K562 (cell line): ENCODE measurements at regions of chr17 and their contacts with region 1.

Region 1: DNA sequence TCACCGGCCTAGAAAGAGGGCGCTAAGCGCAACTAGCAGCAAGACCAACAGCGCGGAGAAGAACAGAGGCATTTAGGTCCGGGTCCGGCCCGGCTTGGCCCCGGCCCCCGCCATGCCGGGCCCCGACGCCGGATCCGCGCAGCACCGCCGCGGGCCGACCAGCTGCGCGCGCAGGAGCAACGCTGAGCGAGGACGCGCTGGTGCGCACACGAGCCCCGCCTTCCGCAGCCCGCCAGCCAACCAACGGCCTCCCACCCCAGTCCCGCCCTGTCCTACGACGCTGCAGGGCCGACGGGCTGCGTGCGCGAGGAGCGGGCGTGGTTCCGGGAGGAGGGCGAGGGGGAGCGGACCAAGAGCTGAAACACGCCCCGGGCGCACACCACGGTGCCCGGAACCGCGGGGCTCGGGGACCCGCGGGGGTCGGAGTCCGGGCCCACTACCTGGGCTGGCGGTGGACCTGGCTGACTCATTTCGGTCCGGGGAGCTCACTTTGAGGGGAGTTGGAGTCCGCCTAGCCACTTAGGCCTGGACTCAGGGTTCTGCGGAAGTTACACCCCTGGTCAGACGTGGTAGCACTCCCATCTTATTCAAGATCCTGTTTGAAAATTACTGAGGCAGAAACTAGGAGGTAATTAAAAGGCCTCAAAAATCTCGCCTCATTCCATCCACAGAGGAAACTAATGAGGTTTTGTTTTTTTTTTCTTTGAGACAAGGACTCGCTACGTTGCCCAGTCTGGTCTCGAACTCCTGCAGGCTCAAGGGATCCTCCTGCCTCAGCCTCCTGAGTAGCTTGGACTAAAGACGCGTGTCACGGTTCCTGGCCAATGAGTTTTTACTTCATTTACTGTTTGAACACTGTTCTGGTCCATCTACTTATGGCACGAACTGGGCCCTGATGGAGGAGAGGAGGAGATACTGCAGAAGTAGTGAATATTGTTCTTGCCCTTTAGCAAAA is at the start of gene BLTP2:
- DNase-seq: peak; percentile 98 to 99 (median 99)
- ATAC-seq: peak; percentile 97
- H3K4me3 ChIP-seq: peak within 1 kb of the TSS; percentile 83
- H3K27ac ChIP-seq: peak within 1 kb of the TSS; percentile 85
- H3K4me1 ChIP-seq: peaks cover 16 to 23% of the 10 kb centered on the region in 2 experiments
- H3K27me3 ChIP-seq: no peaks in the 10 kb centered on the region
- CTCF ChIP-seq: no peak
- EP300 ChIP-seq: no peak
- POLR2A ChIP-seq: peak; percentile 89
- RAD21 ChIP-seq: no peak
- polyA plus RNA-seq, gene BLTP2: 14.7 to 34.3 TPM

Region 2: GRCh38 chr17:28547623-28548416 is 97.4 kb before region 1 on chr17:
- CTCF ChIA-PET with region 1: no interaction called
- POLR2A ChIA-PET with region 1: no interaction called
- in situ Hi-C with region 1: no loop called
- intact Hi-C with region 1: no loop called
- DNase-seq: peak; percentile 58 to 76 (median 66)
- ATAC-seq: peak; percentile 34
- H3K4me3 ChIP-seq: no peak overlapping the region
- H3K27ac ChIP-seq: no peak overlapping the region
- H3K4me1 ChIP-seq: peaks cover 6 to 16% of the 10 kb centered on the region in 2 experiments; a peak in 4 of 5 replicates
- H3K27me3 ChIP-seq: no peaks in the 10 kb centered on the region
- CTCF ChIP-seq: peak; percentile 81 to 89 (median 87)
- EP300 ChIP-seq: no peak
- POLR2A ChIP-seq: no peak
- RAD21 ChIP-seq: peak; percentile 26 to 46; a peak in 2 of 4 replicates

Region 3: GRCh38 chr17:28598799-28599310 is 46.4 kb before region 1 on chr17 and contains the start of gene SPAG5:
- CTCF ChIA-PET with region 1: no interaction called
- POLR2A ChIA-PET with region 1: interaction called, 16 read pairs
- in situ Hi-C with region 1: no loop called
- intact Hi-C with region 1: no loop called
- DNase-seq: peak; percentile 98 to 100 (median 100)
- ATAC-seq: peak; percentile 94
- H3K4me3 ChIP-seq: peak within 1 kb of the TSS; percentile 81
- H3K27ac ChIP-seq: peak within 1 kb of the TSS; percentile 88
- H3K4me1 ChIP-seq: peaks cover 8 to 16% of the 10 kb centered on the region in 2 experiments; a peak in 4 of 5 replicates
- H3K27me3 ChIP-seq: no peaks in the 10 kb centered on the region
- CTCF ChIP-seq: no peak
- EP300 ChIP-seq: no peak
- POLR2A ChIP-seq: peak; percentile 98
- RAD21 ChIP-seq: no peak
- polyA plus RNA-seq, gene SPAG5: 94.4 to 286 TPM

Region 4: DNA sequence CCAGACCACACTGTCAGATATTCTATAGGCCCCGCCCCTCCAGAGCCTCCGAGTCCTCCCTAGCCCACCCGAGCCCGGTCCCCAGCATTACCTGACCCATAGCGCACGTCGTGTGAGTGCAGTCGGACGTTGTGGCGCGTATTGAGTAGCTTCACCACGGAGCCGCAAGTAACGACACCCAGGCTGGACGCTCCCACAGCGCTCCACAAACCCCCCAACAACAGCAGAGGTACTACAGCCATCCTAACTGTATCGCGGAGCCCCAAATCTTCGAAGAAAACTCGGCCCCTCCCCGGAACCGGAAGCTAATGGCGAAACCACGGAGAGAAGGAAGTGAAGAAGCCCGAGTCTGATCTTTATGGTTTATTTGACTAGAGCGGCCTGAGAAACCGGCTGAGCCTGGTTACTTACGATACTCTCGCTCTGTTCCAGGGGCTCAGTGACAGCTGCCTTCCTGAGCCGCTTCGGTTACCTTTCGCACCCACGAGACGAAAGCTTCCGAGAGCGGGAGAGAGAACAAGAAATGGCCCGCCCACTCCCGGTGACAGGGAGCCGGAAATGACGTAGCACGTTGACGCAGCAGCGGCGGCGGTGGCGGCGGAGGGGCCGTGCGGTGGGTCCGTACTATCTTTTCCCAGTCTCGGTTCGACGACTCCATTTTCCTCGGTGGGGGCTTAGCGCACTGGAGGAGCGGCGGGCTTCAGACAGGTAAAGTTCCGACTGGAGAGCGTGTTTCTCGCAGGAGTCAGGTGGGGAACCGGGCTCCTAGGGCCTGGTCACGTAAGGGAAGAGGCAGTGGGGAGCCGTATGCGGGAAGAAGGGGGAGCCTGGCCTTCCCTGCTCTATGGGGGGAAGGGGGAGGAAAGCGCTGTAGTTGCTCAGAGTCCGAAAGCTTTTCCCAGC is 16.6 kb after region 1 on chr17 and contains the starts of genes SDF2 and SUPT6H:
- CTCF ChIA-PET with region 1: interaction called, 5 read pairs
- POLR2A ChIA-PET with region 1: interaction called, 54 read pairs
- in situ Hi-C with region 1: no loop called
- intact Hi-C with region 1: no loop called
- DNase-seq: peak; percentile 92 to 97 (median 94)
- ATAC-seq: peak; percentile 89
- H3K4me3 ChIP-seq: peak within 1 kb of the TSS; percentile 61
- H3K27ac ChIP-seq: peak within 1 kb of the TSS; percentile 98
- H3K4me1 ChIP-seq: peaks cover 6 to 10% of the 10 kb centered on the region in 2 experiments; a peak in 3 of 5 replicates
- H3K27me3 ChIP-seq: no peaks in the 10 kb centered on the region
- CTCF ChIP-seq: peak; percentile 19 to 45 (median 34); a peak in 4 of 6 replicates
- EP300 ChIP-seq: no peak
- POLR2A ChIP-seq: peak; percentile 97
- RAD21 ChIP-seq: no peak
- polyA plus RNA-seq, gene SDF2: 116 to 132 TPM
- polyA plus RNA-seq, gene SUPT6H: 1.7 to 3.3 TPM

Region 5: GRCh38 chr17:28684963-28685362 is 39.7 kb after region 1 on chr17:
- CTCF ChIA-PET with region 1: no interaction called
- POLR2A ChIA-PET with region 1: interaction called, 14 read pairs
- in situ Hi-C with region 1: no loop called
- intact Hi-C with region 1: no loop called
- DNase-seq: peak in 2 of 4 experiments; percentile 44 to 61
- ATAC-seq: peak; percentile 54; the same call in 2 of the 3 replicates
- H3K4me3 ChIP-seq: no peak overlapping the region
- H3K27ac ChIP-seq: no peak overlapping the region
- H3K4me1 ChIP-seq: no peaks in the 10 kb centered on the region
- H3K27me3 ChIP-seq: no peaks in the 10 kb centered on the region
- CTCF ChIP-seq: peak; percentile 15 to 56 (median 35); a peak in 3 of 6 replicates
- EP300 ChIP-seq: no peak
- POLR2A ChIP-seq: no peak
- RAD21 ChIP-seq: peak in 1 of 2 experiments; percentile 58; a peak in 2 of 4 replicates

Region 6: GRCh38 chr17:28700830-28701492 is 55.7 kb after region 1 on chr17:
- CTCF ChIA-PET with region 1: no interaction called
- POLR2A ChIA-PET with region 1: no interaction called
- in situ Hi-C with region 1: no loop called
- intact Hi-C with region 1: no loop called
- DNase-seq: peak in 1 of 4 experiments; percentile 12
- ATAC-seq: no peak
- H3K4me3 ChIP-seq: no peak overlapping the region
- H3K27ac ChIP-seq: no peak overlapping the region
- H3K4me1 ChIP-seq: peaks cover 0 to 7% of the 10 kb centered on the region in 2 experiments; a peak in 1 of 5 replicates
- H3K27me3 ChIP-seq: no peaks in the 10 kb centered on the region
- CTCF ChIP-seq: 0 out of 6 replicates have a peak, but pooled peaks of 1 of the 3 experiments have one; percentile 13
- EP300 ChIP-seq: no peak
- POLR2A ChIP-seq: no peak
- RAD21 ChIP-seq: no peak

Region 7: DNA sequence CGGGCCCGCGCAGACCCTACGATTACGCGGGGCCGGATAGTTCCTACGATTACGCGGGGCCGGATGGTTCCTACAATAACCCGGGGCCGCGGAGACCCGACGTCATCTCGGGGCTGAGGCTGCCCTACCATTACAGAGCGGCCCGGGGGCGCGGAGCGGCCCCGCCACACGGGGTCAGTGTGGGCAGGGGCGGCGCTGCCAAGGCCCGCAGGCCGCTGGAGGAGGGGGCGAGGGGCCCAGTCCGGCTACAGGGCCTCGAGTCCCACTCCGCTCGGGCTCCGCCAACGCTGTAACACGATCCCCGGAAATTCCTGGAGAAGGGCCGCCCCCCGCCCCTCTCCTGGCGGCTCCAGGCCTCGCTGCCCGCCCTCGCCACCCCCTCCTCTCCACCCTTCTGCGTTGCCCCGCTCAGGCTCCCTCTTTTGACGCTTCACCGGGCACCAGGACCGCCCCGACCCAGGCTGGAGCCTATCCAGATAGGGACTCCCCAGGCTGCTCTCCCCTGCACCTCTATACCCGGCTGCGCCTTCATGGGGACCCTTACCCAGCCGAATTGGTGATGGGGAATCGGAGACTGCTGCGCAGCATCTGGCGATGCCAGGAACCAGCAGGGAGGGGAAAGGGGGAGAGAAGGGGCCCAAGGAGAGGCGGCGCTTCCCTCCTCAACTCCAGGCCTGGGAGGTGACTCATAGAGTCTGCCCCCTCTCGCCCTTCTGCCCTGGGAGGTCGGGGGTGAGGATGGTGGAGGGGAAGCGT is 72.5 kb after region 1 on chr17 and contains the start of gene RAB34:
- CTCF ChIA-PET with region 1: interaction called, 5 read pairs
- POLR2A ChIA-PET with region 1: interaction called, 16 read pairs
- in situ Hi-C with region 1: no loop called
- intact Hi-C with region 1: loop called (anchors 2 kb)
- DNase-seq: no peak
- ATAC-seq: no peak
- H3K4me3 ChIP-seq: no peak within 1 kb of the TSS
- H3K27ac ChIP-seq: no peak within 1 kb of the TSS
- H3K4me1 ChIP-seq: peaks cover 25 to 35% of the 10 kb centered on the region in 2 experiments
- H3K27me3 ChIP-seq: 0 out of 5 replicates have a peak, but pooled peaks cover 0 to 11% of the 10 kb centered on the region in 2 experiments
- CTCF ChIP-seq: no peak
- EP300 ChIP-seq: no peak
- POLR2A ChIP-seq: no peak
- RAD21 ChIP-seq: no peak
- polyA plus RNA-seq, gene RAB34: 0.07 TPM in 1 of 2 experiments, not detected in the other

Region 8: GRCh38 chr17:28842282-28843012 is 197.2 kb after region 1 on chr17 and contains the start of gene FAM222B:
- CTCF ChIA-PET with region 1: no interaction called
- POLR2A ChIA-PET with region 1: no interaction called
- in situ Hi-C with region 1: no loop called
- intact Hi-C with region 1: loop called (anchors 10 kb)
- DNase-seq: peak; percentile 95 to 100 (median 99)
- ATAC-seq: peak; percentile 97
- H3K4me3 ChIP-seq: peak within 1 kb of the TSS; percentile 71
- H3K27ac ChIP-seq: peak within 1 kb of the TSS; percentile 76
- H3K4me1 ChIP-seq: peaks cover 17 to 33% of the 10 kb centered on the region in 2 experiments
- H3K27me3 ChIP-seq: no peaks in the 10 kb centered on the region
- CTCF ChIP-seq: no peak
- EP300 ChIP-seq: no peak
- POLR2A ChIP-seq: peak; percentile 95
- RAD21 ChIP-seq: no peak; a peak in 1 of 4 replicates
- polyA plus RNA-seq, gene FAM222B: 4.0 to 6.7 TPM

Region 9: DNA sequence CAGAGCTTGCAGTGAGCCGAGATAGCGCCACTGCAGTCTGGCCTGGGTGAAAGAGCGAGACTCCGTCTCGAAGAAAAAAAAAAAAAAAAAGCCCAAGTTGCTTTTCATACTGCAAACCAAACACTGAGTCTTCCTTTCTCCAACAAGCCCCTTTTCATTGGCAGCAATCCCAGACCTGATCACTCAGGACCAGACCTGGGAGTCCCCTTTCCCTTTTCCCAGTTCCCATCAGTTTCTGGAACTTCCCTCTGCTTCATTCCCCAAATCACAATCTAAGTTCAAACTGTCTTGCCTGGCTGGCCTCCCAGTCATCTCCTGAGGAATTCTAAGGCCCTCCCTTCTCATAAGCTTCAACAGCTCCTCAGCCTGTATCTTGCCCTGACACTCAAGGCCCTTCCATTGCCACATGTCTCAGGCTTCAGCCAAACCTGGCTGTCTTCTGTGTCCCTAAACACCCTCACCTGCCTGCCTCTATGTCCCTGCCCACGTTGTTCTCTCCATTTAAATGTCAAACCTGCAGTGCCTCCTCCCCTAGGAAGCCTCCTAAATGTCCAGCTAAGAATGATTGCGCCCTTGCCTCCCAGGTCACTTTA is 317.9 kb after region 1 on chr17:
- CTCF ChIA-PET with region 1: no interaction called
- POLR2A ChIA-PET with region 1: no interaction called
- in situ Hi-C with region 1: no loop called
- intact Hi-C with region 1: no loop called
- DNase-seq: no peak
- ATAC-seq: no peak
- H3K4me3 ChIP-seq: no peak overlapping the region
- H3K27ac ChIP-seq: no peak overlapping the region
- H3K4me1 ChIP-seq: no peaks in the 10 kb centered on the region; a peak in 1 of 5 replicates
- H3K27me3 ChIP-seq: peaks cover 42 to 56% of the 10 kb centered on the region in 2 experiments
- CTCF ChIP-seq: no peak
- EP300 ChIP-seq: no peak
- POLR2A ChIP-seq: no peak
- RAD21 ChIP-seq: no peak